H1 (cell line): ENCODE measurements at regions of chr2 and their contacts with region 1.

Region 1: GRCh38 chr2:235754352-235755207 is 260.7 kb downstream of the AGAP1 start:
- DNase-seq: no peak
- H3K4me3 ChIP-seq: no peak overlapping the region
- H3K27ac ChIP-seq: no peak overlapping the region
- H3K4me1 ChIP-seq: peaks cover 2 to 15% (median 7%) of the 10 kb centered on the region in 4 experiments
- H3K27me3 ChIP-seq: no peaks in the 10 kb centered on the region
- CTCF ChIP-seq: no peak
- EP300 ChIP-seq: no peak
- POLR2A ChIP-seq: no peak
- RAD21 ChIP-seq: no peak

Region 2: DNA sequence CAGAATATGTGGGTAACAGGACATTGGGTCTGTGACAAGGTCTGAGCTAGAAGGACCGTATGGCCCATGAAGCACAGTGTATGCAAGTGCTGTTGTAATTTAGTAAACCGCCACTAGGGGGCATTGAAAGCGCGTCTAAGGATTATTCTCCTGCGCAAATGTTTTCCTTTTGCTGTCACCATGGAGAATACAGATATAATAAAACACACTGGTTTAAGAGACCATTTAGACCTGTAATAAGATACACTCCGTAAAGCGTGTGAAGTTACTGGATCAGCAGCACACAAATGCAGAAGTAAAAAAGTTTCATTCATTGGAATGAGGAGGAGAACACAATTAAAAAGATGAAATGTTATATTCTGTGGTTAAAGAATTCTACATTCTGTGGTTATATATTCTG is 11.7 kb after region 1 on chr2:
- CTCF ChIA-PET with region 1: interaction called, 33 read pairs
- POLR2A ChIA-PET with region 1: no interaction called
- DNase-seq: peak in 1 of 2 experiments; percentile 73
- H3K4me3 ChIP-seq: no peak overlapping the region
- H3K27ac ChIP-seq: no peak overlapping the region
- H3K4me1 ChIP-seq: no peaks in the 10 kb centered on the region
- H3K27me3 ChIP-seq: no peaks in the 10 kb centered on the region
- CTCF ChIP-seq: peak; percentile 14 to 88 (median 69)
- EP300 ChIP-seq: no peak
- POLR2A ChIP-seq: no peak
- RAD21 ChIP-seq: peak; percentile 79 to 84

Region 3: DNA sequence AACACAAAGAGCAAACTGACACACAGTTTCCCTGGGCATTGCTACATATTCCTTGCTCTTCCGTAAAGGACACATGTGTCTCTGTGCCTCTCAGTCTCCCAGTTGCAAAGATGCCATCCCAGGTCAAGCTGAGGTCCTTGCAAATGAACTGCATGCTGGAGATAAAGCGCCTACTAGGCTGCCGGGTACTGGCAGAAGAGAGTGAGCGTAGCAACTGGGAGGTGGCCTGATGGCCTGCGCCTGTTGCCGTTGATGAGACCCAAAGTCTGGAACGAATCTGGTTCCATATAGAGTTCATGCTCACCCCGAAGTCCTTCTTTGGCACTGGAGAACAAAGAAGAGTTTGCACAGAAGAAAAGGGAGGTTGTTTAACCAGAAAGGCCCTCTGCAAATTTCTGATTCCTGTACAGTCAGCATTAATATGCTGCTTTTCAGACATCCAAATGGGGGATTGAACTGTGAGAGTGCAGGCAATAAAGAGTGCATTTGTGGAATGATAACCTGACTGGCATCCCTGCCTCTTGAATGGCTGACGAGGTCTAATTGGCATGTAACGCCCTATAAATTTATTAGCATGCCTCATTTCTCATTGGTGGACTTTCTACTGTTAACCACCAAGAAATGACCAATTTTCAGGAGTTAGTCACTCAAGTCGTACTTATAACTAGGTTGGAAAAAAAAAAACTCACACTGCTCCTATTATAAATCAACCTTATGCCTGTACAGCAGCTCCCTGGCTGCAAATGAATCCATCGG is 334.9 kb after region 1 on chr2:
- CTCF ChIA-PET with region 1: no interaction called
- POLR2A ChIA-PET with region 1: no interaction called
- DNase-seq: no peak
- H3K4me3 ChIP-seq: no peak overlapping the region
- H3K27ac ChIP-seq: no peak overlapping the region
- H3K4me1 ChIP-seq: peaks cover 5 to 21% (median 19%) of the 10 kb centered on the region in 4 experiments
- H3K27me3 ChIP-seq: no peaks in the 10 kb centered on the region; a peak in 1 of 7 replicates
- CTCF ChIP-seq: no peak
- EP300 ChIP-seq: no peak
- POLR2A ChIP-seq: no peak
- RAD21 ChIP-seq: no peak